Activated naive CD4-positive, alpha-beta T cell treated with anti-CD3 and anti-CD28 coated beads for 36 hours (primary cell): ENCODE measurements at regions of chr6 and their contacts with region 1.

Region 1: GRCh38 chr6:118709859-118710350 is 58.5 kb upstream of the CEP85L start:
- DNase-seq: peak; percentile 88
- H3K4me3 Mint-ChIP-seq: peak overlapping the region; percentile 82
- H3K27ac Mint-ChIP-seq: peak overlapping the region; percentile 98
- H3K4me1 Mint-ChIP-seq: peaks cover 70% of the 10 kb centered on the region
- H3K27me3 Mint-ChIP-seq: no peaks in the 10 kb centered on the region

Region 2: DNA sequence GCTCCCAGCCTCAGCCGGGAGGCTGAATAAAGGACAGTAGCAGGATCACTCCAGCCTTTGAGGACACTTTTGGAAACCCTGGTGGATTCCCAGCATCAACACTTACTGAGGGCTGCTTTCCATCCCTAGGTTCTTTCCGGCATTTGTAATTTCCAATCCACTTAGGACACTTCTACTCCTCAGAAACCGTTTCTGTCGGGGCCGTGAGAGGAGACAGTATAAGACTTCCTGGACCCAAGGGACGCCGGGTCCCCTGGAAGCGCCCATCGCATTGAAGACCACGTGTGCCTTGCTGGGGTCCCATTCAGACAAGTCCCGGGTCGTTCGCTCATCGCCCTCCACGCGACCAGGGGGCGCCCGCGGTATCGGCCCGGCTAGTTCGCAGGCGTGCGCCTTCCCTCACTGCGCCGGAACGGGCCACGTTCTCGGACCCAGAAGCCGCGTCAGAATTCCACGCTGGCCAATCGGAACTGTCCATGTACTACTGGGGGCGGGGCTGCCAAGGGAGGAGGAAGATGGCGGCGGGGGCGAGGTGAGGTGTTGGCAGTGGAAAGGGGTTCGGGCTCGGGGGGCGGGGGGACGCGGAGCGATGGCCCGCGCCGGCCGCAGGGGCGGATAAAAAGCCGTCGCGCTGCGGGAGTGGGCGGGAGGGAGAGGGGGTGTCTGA is 1034.8 kb before region 1 on chr6 and contains the start of gene NUS1:
- CTCF ChIA-PET with region 1: no interaction called
- intact Hi-C with region 1: loop called (anchors 10 kb)
- DNase-seq: peak; percentile 98
- H3K4me3 Mint-ChIP-seq: peak within 1 kb of the TSS; percentile 94
- H3K27ac Mint-ChIP-seq: peak within 1 kb of the TSS; percentile 93
- H3K4me1 Mint-ChIP-seq: peaks cover 46% of the 10 kb centered on the region
- H3K27me3 Mint-ChIP-seq: no peaks in the 10 kb centered on the region
- total RNA-seq, gene NUS1: 24.0 to 24.1 TPM

Region 3: GRCh38 chr6:118651282-118652050 is 58.4 kb before region 1 on chr6 and contains the start of gene CEP85L:
- CTCF ChIA-PET with region 1: interaction called, 3 read pairs
- intact Hi-C with region 1: loop called (anchors 1 kb)
- DNase-seq: peak; percentile 90
- H3K4me3 Mint-ChIP-seq: peak within 1 kb of the TSS; percentile 86
- H3K27ac Mint-ChIP-seq: peak within 1 kb of the TSS; percentile 89
- H3K4me1 Mint-ChIP-seq: peaks cover 49% of the 10 kb centered on the region
- H3K27me3 Mint-ChIP-seq: no peaks in the 10 kb centered on the region
- total RNA-seq, gene CEP85L: 31.4 to 31.9 TPM

Region 4: DNA sequence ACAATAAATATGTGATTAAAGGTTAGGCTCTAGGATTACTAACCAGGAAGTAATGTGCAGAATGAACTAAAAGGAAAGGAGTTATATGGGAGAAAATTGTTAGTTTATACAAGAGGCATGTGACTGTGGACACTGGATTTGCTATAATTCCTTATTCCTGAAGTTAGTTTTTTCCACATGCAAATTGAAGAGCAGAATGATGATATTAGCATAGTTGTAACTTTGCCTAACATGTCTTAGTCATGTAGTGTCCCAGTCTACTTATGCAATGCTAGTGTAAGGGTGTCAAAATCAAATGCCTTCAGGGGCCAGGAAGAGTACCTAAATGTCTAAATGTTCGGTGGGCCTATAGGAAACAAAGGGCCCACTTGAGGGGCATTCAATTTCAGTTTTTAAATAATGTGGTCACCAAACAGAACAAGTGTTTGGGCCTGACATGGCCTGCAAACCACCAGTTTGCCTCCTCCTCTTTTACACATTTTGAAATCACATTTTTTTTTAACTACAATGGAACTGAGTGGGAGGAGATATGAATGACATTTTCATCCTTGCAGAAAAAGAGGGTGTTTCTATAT is 30.5 kb before region 1 on chr6:
- CTCF ChIA-PET with region 1: no interaction called
- intact Hi-C with region 1: loop called (anchors 1 kb)
- DNase-seq: no peak
- H3K4me3 Mint-ChIP-seq: no peak overlapping the region
- H3K27ac Mint-ChIP-seq: peak overlapping the region; percentile 14
- H3K4me1 Mint-ChIP-seq: peaks cover 60% of the 10 kb centered on the region
- H3K27me3 Mint-ChIP-seq: no peaks in the 10 kb centered on the region

Region 5: DNA sequence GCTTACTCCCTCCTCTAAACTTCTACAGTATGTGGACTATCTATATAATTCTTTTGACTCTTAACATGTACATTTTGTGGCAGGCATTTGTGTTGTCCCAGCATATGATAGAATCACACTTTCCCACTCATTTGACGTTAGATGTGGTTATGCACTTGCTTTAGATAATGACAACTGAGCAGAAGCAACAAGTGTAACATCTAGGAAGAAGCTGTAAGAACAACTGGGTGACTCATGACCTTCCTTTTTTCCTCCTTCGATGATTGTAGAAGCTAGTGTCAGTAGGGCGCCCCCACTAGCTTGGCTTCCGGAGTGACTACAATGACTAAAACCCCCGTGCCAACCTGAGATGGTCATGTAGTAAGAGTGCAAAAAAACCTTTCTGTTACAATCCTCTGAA is 16.0 kb after region 1 on chr6:
- CTCF ChIA-PET with region 1: interaction called, 24 read pairs
- intact Hi-C with region 1: loop called (anchors 1 kb)
- DNase-seq: peak; percentile 93
- H3K4me3 Mint-ChIP-seq: peak overlapping the region; percentile 26
- H3K27ac Mint-ChIP-seq: peak overlapping the region; percentile 91
- H3K4me1 Mint-ChIP-seq: peaks cover 55% of the 10 kb centered on the region
- H3K27me3 Mint-ChIP-seq: no peaks in the 10 kb centered on the region

Region 6: DNA sequence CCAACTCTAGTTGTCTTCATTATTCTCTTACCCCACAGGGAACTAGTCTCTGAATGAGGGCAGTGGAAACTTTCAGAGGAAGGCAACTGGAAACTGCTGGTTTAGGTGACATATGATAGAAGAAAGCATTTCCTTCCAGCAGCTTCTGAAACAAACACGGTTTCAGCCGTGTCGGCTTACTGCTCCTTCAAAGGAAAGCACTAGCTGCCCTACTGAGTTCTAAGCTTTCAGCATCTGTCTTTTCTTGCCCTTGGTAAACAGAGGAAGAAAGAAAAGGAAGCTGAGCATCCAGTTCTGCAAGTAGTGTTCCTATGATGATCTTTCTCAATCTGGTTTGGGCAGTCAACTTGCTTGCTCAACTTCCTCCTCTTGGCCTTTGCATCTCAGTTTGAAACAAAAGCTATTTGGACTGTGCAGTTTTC is 59.0 kb after region 1 on chr6:
- CTCF ChIA-PET with region 1: interaction called, 6 read pairs
- intact Hi-C with region 1: loop called (anchors 1 kb)
- DNase-seq: peak; percentile 69
- H3K4me3 Mint-ChIP-seq: peak overlapping the region; percentile 30
- H3K27ac Mint-ChIP-seq: peak overlapping the region; percentile 77
- H3K4me1 Mint-ChIP-seq: peaks cover 31% of the 10 kb centered on the region
- H3K27me3 Mint-ChIP-seq: no peaks in the 10 kb centered on the region

Region 7: GRCh38 chr6:118783931-118784550 is 74.1 kb after region 1 on chr6:
- CTCF ChIA-PET with region 1: no interaction called
- intact Hi-C with region 1: no loop called
- DNase-seq: no peak
- H3K4me3 Mint-ChIP-seq: no peak overlapping the region
- H3K27ac Mint-ChIP-seq: no peak overlapping the region
- H3K4me1 Mint-ChIP-seq: peaks cover 18% of the 10 kb centered on the region
- H3K27me3 Mint-ChIP-seq: no peaks in the 10 kb centered on the region

Region 8: DNA sequence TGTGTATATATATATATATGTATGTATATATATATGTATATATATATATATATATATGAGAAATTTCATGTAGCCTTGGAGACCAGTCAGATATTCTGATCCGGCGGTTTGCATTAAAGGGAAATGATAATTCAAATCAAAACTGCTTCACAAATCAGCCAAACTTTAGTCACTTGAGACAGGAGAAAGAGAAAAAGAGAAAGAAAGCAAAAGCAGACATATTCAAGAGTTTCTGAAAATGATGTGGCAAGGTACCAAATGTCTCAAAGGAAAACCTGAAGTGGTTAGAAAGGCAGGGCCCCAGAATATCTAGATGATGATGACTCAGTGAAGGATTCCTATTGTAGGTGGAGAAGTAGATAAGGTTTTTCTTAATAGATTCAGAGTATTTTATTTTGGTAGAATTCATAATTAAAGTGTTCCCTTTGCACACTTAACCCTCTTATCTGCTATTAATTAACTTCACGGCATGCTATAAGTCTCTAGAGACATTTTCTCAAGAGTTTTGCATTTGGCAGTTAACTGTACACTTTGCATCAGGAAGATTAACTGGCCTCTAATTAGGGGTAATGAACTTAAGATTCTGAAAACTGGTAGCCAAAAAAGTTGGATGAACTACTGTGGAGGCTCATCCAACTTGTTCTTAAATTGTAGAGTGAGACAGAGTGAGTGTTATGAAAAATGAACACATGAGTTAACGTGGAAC is 133.9 kb after region 1 on chr6:
- CTCF ChIA-PET with region 1: no interaction called
- intact Hi-C with region 1: loop called (anchors 1 kb)
- DNase-seq: peak; percentile 50
- H3K4me3 Mint-ChIP-seq: no peak overlapping the region
- H3K27ac Mint-ChIP-seq: peak overlapping the region; percentile 2
- H3K4me1 Mint-ChIP-seq: peaks cover 23% of the 10 kb centered on the region
- H3K27me3 Mint-ChIP-seq: no peaks in the 10 kb centered on the region